Heart left ventricle (tissue), 16 donors: ENCODE measurements at regions of chr1 and their contacts with region 1.

Region 1: DNA sequence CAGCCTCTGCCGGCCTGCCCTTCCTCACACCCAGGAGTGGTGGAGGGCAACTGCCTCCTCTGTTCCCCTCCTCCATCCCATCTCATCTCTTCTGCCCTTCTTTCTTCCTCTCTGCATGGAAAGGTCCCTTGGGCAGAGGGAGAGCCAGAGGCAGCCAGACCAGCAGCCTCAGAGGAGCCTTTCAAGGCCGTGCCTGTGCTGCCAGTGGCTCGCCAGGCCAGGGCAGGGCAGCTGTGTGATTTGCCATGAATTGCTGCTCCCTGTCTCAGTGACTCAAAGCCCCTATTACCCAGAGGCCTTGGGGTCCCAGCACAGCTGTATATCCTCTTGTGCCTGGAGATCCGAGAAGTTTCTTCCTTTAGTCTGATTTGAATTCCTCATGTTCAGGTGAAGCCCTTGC is 21.9 kb downstream of the TMCC2 start:
- DNase-seq: no peak
- ATAC-seq: no peak
- H3K4me3 ChIP-seq: no peak overlapping the region
- H3K27ac ChIP-seq: peak overlapping the region in 2 of 12 donors; percentile 37 to 41
- H3K4me1 ChIP-seq: peaks cover 0 to 35% (median 25%) of the 10 kb centered on the region in 12 donors
- H3K27me3 ChIP-seq: no peaks in the 10 kb centered on the region
- CTCF ChIP-seq: no peak
- POLR2A ChIP-seq: no peak

Region 2: DNA sequence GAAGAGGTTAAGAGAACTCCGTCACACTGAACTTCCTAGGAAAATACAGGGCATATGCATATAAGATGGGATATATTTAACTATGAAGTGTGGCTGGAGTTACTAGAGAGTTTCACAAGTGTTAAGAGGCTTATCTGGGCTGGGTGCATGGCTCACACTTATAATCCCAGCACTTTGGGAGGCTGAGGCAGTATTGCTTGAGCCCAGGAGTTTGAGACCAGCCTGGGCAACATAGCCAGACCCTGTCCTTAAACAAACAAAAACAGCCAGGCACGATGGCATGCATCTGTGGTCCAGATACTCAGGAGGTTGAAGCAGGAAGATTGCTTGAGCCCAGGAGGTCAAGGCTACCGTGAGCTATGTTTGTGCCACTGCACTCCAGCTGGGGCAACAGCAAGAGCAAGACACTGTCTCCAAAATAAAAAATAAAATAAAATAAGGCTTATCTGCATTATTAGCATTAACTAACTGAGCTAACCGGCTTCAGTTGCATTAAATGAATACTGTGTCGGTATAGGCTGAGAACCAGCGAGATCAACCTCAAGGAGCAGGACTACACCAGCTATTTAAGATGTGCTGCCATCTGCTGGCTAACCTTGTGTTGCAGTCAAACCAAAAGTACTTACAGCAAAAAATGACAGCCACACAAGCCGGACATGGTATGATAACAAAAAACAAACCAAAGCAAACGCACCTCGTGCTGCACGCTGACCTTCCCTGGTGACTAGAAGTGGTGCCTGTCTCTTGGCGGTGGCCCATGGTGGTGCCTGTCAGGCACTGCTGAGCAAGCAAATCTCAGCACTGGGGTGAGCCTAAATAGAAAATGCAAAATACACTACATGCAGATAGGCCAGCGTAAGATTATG is 108.2 kb before region 1 on chr1:
- intact Hi-C with region 1: loop called in 4 of 10 experiments (anchors 5 to 10 kb)
- DNase-seq: peak; percentile 53 to 80 (median 64)
- ATAC-seq: peak; percentile 72 to 85 (median 78)
- H3K4me3 ChIP-seq: peak overlapping the region in 3 of 12 donors; percentile 10 to 13 (median 13)
- H3K27ac ChIP-seq: peak overlapping the region in 1 of 12 donors; percentile 14
- H3K4me1 ChIP-seq: peaks cover 0 to 27% (median 10%) of the 10 kb centered on the region in 12 donors
- H3K27me3 ChIP-seq: no peaks in the 10 kb centered on the region
- CTCF ChIP-seq: peak; percentile 68 to 87 (median 78)
- POLR2A ChIP-seq: no peak

Region 3: GRCh38 chr1:205211169-205211838 is 38.3 kb before region 1 on chr1 and contains the start of gene DSTYK:
- intact Hi-C with region 1: no loop called
- DNase-seq: peak; percentile 94 to 96 (median 95)
- ATAC-seq: peak; percentile 95 to 99 (median 98)
- H3K4me3 ChIP-seq: peak within 1 kb of the TSS; percentile 67 to 99 (median 90)
- H3K27ac ChIP-seq: peak within 1 kb of the TSS; percentile 60 to 97 (median 90)
- H3K4me1 ChIP-seq: peaks cover 0 to 37% (median 11%) of the 10 kb centered on the region in 12 donors
- H3K27me3 ChIP-seq: no peaks in the 10 kb centered on the region
- CTCF ChIP-seq: peak in 2 of 12 donors; percentile 12 to 25
- POLR2A ChIP-seq: peak; percentile 19 to 70
- total RNA-seq, gene DSTYK: 5.2 to 10.1 (median 8.0) TPM